ENCODE measurements at regions of chr12 and their contacts with region 1.

Region 1: GRCh38 chr12:124453419-124454351 is 113.7 kb downstream of the NCOR2 start:
- DNase-seq: peak; percentile 95 to 96
- ATAC-seq: peak; percentile 85
- H3K4me3 ChIP-seq: no peak overlapping the region
- H3K27ac ChIP-seq: peak overlapping the region; percentile 50 to 51
- H3K4me1 ChIP-seq: no peaks in the 10 kb centered on the region
- H3K27me3 ChIP-seq: no peaks in the 10 kb centered on the region

Region 2: GRCh38 chr12:124311292-124312109 is 142.2 kb before region 1 on chr12:
- intact Hi-C with region 1: no loop called
- DNase-seq: no peak
- ATAC-seq: peak; percentile 2
- H3K4me3 ChIP-seq: no peak overlapping the region
- H3K27ac ChIP-seq: no peak overlapping the region
- H3K4me1 ChIP-seq: no peaks in the 10 kb centered on the region
- H3K27me3 ChIP-seq: no peaks in the 10 kb centered on the region

Region 3: GRCh38 chr12:124369055-124369900 is 84.4 kb before region 1 on chr12:
- intact Hi-C with region 1: loop called in 1 of 2 experiments (anchors 5 kb)
- DNase-seq: peak; percentile 91 to 96
- ATAC-seq: peak; percentile 92
- H3K4me3 ChIP-seq: no peak overlapping the region
- H3K27ac ChIP-seq: peak overlapping the region; percentile 49 to 76
- H3K4me1 ChIP-seq: no peaks in the 10 kb centered on the region
- H3K27me3 ChIP-seq: no peaks in the 10 kb centered on the region

Region 4: DNA sequence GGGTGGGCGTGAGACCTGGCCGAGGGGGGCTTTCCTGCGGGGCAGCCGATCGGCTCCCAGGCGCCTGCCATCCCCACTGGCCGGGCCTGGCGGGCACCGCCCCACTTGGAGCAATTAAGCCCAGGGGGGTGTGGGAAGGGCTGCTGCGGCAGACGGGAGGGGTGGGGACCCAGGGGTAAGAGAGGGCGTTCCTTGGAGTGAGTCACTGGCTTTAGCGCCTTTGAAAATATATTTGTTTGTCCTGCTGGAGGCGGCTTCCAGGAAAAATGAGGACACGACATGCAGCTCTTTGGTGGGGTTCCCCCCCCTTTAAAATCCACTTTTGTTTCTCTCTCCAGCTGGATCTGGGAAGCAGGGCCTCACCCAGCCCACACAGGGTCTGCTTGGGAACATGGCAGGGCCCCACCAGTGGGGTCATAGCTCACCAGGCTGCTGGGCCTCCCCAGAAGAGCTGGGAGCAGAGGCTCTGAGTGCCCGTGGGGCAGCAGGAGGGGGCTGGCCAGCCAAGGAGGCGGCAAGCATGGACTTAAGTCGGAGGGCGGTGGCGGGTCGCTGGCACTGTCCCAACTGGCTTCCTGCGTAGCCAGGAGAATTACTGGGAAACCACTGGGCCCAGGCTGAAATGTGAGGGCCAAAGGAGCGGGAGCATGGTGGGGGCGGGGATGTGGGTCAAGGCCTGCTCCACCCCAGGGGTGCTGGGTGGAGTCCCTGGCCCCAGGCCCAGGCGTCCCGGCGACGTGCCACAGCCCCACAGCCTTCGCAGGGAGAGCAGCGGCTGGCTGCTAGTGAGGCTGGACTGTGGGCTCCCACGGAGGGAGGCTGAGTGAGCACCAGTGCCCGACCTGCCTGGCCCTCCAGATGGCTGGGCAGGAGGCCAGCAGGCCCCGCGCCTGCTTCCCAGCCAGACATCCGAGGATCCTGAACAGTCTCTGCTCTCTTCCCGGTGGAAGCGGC is 30.8 kb before region 1 on chr12:
- intact Hi-C with region 1: loop called in 1 of 2 experiments (anchors 2 kb)
- DNase-seq: peak; percentile 96 to 97
- ATAC-seq: peak; percentile 91
- H3K4me3 ChIP-seq: no peak overlapping the region
- H3K27ac ChIP-seq: peak overlapping the region; percentile 71 to 98
- H3K4me1 ChIP-seq: no peaks in the 10 kb centered on the region
- H3K27me3 ChIP-seq: no peaks in the 10 kb centered on the region

Region 5: GRCh38 chr12:124518051-124518932 is 64.6 kb after region 1 on chr12:
- intact Hi-C with region 1: loop called (anchors 2 to 5 kb)
- DNase-seq: peak; percentile 98 to 99
- ATAC-seq: peak; percentile 84
- H3K4me3 ChIP-seq: no peak overlapping the region
- H3K27ac ChIP-seq: peak overlapping the region; percentile 87 to 98
- H3K4me1 ChIP-seq: no peaks in the 10 kb centered on the region
- H3K27me3 ChIP-seq: no peaks in the 10 kb centered on the region

Region 6: GRCh38 chr12:124545508-124546418 is 92.1 kb after region 1 on chr12:
- intact Hi-C with region 1: no loop called
- DNase-seq: peak; percentile 78 to 82
- ATAC-seq: no peak
- H3K4me3 ChIP-seq: no peak overlapping the region
- H3K27ac ChIP-seq: no peak overlapping the region
- H3K4me1 ChIP-seq: no peaks in the 10 kb centered on the region
- H3K27me3 ChIP-seq: no peaks in the 10 kb centered on the region

Region 7: DNA sequence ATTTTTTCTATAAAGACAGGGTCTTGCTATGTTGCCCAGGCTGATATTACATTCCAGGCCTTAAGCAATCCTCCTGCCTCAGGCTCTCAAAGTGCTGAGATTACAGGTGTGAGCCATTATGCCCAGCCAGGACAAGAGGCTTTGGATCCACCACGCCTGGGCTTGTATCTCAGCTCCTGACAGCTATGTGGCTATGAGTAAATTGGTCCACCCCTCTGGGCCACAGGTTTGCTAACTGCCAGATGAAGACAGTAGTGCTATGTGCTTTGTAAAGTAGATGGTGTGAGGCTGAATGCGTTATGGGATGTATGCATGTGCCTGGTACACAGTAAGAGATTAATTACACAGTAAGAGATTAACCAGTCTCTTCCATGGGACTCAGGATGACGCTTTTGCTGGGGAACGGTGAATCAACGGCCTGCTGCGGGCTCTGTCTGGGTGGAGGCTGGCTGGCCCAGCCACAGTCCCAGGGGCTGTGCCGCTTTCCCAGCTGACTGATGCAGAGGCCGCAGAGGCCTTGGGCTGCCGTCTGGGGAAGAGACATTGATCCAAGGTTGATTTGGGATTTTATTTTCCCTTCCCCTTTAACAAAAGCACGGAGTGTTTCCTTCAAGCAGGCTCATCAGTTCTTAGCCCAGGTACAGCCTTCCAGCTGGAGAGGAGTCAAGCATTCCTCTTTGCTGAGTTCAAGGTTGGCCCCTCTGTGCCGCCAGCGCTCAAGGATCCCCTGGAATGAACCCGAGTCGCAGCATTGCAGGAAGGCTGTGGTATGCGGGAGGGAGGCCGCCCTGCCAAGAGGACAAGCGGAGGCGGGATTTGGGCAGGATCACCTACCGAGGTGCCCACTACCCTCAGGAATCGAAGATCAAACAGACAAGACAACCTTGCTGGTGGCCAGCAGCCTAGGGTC is 167.3 kb after region 1 on chr12:
- intact Hi-C with region 1: no loop called
- DNase-seq: peak; percentile 86 to 90
- ATAC-seq: peak; percentile 71
- H3K4me3 ChIP-seq: no peak overlapping the region
- H3K27ac ChIP-seq: peak overlapping the region in 1 of 2 donors; percentile 68
- H3K4me1 ChIP-seq: no peaks in the 10 kb centered on the region
- H3K27me3 ChIP-seq: no peaks in the 10 kb centered on the region

Region 8: GRCh38 chr12:124680863-124681778 is 227.4 kb after region 1 on chr12:
- intact Hi-C with region 1: loop called in 1 of 2 experiments (anchors 10 kb)
- DNase-seq: peak; percentile 89 to 90
- ATAC-seq: peak; percentile 76
- H3K4me3 ChIP-seq: no peak overlapping the region
- H3K27ac ChIP-seq: peak overlapping the region in 1 of 2 donors; percentile 53
- H3K4me1 ChIP-seq: peaks cover 0 to 3% of the 10 kb centered on the region in 2 donors
- H3K27me3 ChIP-seq: no peaks in the 10 kb centered on the region

Region 9: DNA sequence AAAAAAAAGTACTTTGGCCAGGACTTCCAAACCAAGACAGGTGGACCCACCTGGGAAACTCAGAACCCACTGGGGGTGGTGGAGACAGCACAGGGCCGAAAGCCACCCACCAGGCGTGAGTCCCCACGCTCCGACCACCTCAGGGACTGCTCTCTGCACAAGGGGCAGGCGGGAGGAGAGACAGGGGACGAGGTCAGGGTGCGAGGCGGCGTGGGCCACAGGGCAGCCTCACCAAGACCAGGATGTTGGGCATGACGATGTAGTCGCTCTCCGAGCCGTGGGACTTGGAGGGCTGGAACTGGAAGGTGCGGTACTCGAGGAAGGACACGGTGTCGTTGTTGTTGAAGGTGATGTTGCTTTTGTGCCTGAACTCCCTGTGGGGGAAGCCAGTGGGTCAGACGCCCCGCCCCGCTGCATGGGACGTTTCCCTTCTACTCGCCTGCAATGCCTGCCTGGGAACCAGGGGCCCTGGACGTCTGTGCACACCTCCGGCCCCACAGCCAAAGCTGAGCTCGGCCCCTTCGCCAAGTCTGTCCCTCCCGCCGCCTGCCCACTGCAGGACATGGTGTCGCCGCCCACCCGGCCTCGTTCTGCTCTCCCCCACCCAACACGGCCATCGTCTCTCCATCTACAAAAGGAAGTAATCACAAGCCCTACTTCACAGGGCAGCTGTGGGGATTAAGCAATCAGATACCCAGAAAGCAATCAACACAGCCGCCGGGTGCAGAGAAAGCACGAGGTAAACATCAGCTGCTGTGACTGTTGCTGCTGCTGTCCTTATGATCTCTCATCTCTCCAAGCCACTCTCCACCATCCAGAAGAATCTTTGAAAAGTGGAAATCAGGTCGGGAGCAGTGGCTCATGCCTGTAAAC is 361.3 kb after region 1 on chr12:
- intact Hi-C with region 1: no loop called
- DNase-seq: peak in 1 of 2 donors; percentile 73
- ATAC-seq: no peak
- H3K4me3 ChIP-seq: no peak overlapping the region
- H3K27ac ChIP-seq: no peak overlapping the region
- H3K4me1 ChIP-seq: no peaks in the 10 kb centered on the region
- H3K27me3 ChIP-seq: no peaks in the 10 kb centered on the region

Measured in aorta (tissue), 5 donors.